ENCODE measurements at regions of chr20 and their contacts with region 1.

Region 1: DNA sequence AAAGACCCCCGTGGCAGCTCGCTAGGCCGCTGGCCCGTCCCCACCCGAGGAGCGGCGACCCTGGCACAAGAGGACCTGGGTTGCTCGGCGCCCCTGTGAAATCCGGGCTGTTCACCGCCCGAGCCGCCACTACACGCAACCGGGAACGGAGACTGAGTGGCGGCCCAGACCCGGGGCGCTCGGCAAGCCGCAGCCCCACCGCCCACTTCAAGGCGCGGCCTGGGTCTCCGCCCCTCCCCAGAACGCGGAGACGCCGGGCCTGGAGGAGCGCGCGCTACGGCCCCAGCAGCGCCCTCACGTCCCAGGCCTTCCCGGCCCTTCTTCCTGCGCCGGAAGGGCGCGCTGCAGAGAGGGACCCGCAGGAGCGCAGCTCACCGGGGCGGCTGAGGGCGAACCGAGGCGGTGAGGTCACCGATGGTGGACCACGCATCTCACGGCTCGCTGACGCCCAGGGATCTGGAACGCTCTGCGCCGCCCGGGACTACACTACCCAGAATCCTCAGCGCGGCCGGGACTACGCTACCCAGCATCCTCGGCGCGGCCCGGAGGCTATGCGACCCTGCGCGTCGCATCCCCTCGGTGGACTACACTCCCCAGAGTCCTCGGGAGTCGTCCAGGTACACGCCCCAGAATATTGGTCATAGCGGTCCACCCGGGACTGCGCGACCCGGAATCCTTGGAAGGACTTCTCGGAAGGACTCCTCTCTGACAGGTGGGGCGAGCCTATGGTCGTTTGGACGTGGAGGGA is at the start of gene ZNF337:
- DNase-seq: peak; percentile 91 to 96 (median 94)
- H3K4me3 ChIP-seq: peak within 1 kb of the TSS; percentile 54
- H3K27ac ChIP-seq: peak within 1 kb of the TSS; percentile 85 to 94
- H3K4me1 ChIP-seq: no peaks in the 10 kb centered on the region
- H3K27me3 ChIP-seq: no peaks in the 10 kb centered on the region
- CTCF ChIP-seq: peak in 2 of 3 donors; percentile 20 to 39
- EP300 ChIP-seq: no peak
- POLR2A ChIP-seq: peak; percentile 85
- total RNA-seq, gene ZNF337: 16.5 to 29.5 (median 23.0) TPM

Region 2: GRCh38 chr20:25223179-25223661 is 473.3 kb before region 1 on chr20:
- intact Hi-C with region 1: no loop called
- DNase-seq: no peak
- H3K4me3 ChIP-seq: no peak overlapping the region
- H3K27ac ChIP-seq: no peak overlapping the region
- H3K4me1 ChIP-seq: no peaks in the 10 kb centered on the region
- H3K27me3 ChIP-seq: no peaks in the 10 kb centered on the region
- CTCF ChIP-seq: no peak
- EP300 ChIP-seq: no peak
- POLR2A ChIP-seq: no peak

Region 3: GRCh38 chr20:25508078-25508770 is 188.3 kb before region 1 on chr20:
- intact Hi-C with region 1: loop called in 1 of 4 experiments (anchors 10 kb)
- DNase-seq: peak; percentile 45 to 75 (median 70)
- H3K4me3 ChIP-seq: no peak overlapping the region
- H3K27ac ChIP-seq: peak overlapping the region; percentile 18 to 52
- H3K4me1 ChIP-seq: peaks cover 6% of the 10 kb centered on the region
- H3K27me3 ChIP-seq: no peaks in the 10 kb centered on the region
- CTCF ChIP-seq: no peak
- EP300 ChIP-seq: no peak
- POLR2A ChIP-seq: no peak

Region 4: GRCh38 chr20:25623736-25624499 is 72.6 kb before region 1 on chr20 and contains the start of gene NANP:
- intact Hi-C with region 1: loop called in 1 of 4 experiments (anchors 10 kb)
- DNase-seq: peak; percentile 97
- H3K4me3 ChIP-seq: peak within 1 kb of the TSS; percentile 82
- H3K27ac ChIP-seq: peak within 1 kb of the TSS; percentile 81 to 85
- H3K4me1 ChIP-seq: peaks cover 6% of the 10 kb centered on the region
- H3K27me3 ChIP-seq: no peaks in the 10 kb centered on the region
- CTCF ChIP-seq: peak in 1 of 3 donors; percentile 25
- EP300 ChIP-seq: no peak
- POLR2A ChIP-seq: peak; percentile 75
- total RNA-seq, gene NANP: 2.9 to 8.1 (median 5.2) TPM

Measured in ovary (tissue), 10 donors.